Activated T-helper 1 cell treated with anti-CD3 and anti-CD28 coated beads, Interleukin-12 subunit alpha, Interleukin-12 subunit beta, Interleukin-2, Interleukin-4 antibody, amounts not matched to agents 30 ng/mL and 10 ng/mL and 1 ng/mL, durations not matched to agents 14 hours and 24 hours and 36 hours (primary cell): ENCODE measurements at regions of chr16 and their contacts with region 1.

Region 1: GRCh38 chr16:28974437-28975157 is at the start of gene SPNS1:
- DNase-seq: peak; percentile 91
- H3K4me3 Mint-ChIP-seq: peak within 1 kb of the TSS; percentile 95
- H3K27ac Mint-ChIP-seq: peak within 1 kb of the TSS; percentile 92
- H3K4me1 Mint-ChIP-seq: peaks cover 24% of the 10 kb centered on the region
- H3K27me3 Mint-ChIP-seq: no peaks in the 10 kb centered on the region
- total RNA-seq, gene SPNS1: 21.2 and 26.9 TPM in 2 replicates

Region 2: DNA sequence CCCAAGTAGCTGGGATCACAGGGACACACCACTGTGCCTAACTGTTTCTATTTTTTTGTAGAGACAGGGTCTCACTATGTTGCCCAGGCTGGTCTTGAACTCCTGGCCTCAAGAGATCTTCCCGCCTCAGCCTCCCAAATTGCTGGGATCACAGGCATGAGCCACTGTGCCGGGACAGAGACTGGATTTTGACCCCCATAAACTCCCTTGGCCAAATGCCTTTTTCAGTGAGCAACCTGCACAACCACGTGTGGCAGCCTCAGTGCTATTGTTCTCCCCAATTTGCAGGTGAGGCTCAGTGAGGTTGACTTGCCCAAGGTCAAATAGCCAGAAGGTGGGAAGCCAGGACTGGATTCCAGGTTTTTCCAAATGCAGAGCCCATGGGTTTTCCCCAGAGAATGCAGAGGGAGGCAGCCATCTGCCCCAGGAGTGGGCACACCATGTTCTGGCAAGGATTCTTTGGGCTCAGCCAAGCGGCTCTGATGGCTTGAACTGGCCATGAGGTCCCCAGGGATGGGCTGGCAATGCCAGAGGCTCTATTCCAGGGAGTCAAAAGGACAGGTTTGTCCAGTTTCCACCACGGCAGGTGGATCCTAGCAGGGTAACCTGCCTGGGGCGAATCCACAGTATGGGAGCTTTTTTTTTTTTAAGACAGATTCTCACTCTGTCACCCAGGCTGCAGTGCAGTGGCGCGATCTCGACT is 469.7 kb before region 1 on chr16:
- intact Hi-C with region 1: no loop called
- DNase-seq: no peak
- H3K4me3 Mint-ChIP-seq: no peak overlapping the region
- H3K27ac Mint-ChIP-seq: no peak overlapping the region
- H3K4me1 Mint-ChIP-seq: peaks cover 25% of the 10 kb centered on the region
- H3K27me3 Mint-ChIP-seq: peaks cover 13% of the 10 kb centered on the region

Region 3: DNA sequence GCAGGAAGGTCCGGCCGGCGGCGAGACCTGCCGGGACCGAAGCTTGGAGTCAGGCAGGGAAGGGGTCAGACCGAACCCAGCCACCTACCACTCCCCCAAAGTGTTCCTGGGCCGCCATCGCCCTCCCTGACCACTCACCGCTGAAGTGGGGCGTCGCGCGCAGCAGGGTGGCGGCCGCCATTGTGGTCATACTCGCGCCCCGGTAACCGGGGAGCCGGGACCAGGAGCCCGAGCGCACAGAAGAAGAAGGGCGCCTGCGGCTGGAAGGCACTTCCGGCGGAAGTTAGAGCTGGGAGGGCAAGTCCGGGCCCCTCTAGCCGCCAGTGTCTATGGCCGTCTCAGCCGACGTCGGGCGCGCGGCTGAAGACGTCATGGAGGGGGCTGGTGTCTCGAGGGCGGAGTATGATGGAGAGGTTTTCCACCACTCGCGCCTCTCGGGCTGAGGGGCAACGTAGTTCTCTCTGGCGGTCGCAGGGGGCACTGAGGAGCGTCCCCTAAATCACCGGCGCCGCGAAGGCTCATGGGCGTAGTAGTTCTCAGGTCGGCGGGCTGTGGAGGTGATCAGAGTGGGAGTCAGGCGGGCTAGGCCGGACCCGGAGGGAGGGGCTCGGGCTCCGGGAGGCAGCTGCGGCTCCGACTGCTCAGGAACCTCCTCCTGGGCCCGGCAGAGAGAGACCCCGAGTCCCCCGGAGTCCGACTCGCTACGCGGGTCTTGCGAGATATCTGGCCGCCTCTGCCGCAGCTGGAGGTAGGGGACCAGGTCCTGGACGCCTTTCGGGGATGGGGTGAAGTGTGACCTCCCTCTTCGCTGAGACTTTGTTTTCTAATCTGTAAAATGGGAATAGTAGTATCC is 128.3 kb before region 1 on chr16 and contains the start of gene TUFM:
- intact Hi-C with region 1: loop called (anchors 1 kb)
- DNase-seq: peak; percentile 97
- H3K4me3 Mint-ChIP-seq: peak within 1 kb of the TSS; percentile 96
- H3K27ac Mint-ChIP-seq: peak within 1 kb of the TSS; percentile 94
- H3K4me1 Mint-ChIP-seq: peaks cover 12% of the 10 kb centered on the region
- H3K27me3 Mint-ChIP-seq: no peaks in the 10 kb centered on the region
- total RNA-seq, gene TUFM: 261 and 264 TPM in 2 replicates

Region 4: GRCh38 chr16:28910086-28911031 is 64.2 kb before region 1 on chr16:
- intact Hi-C with region 1: no loop called
- DNase-seq: no peak
- H3K4me3 Mint-ChIP-seq: no peak overlapping the region
- H3K27ac Mint-ChIP-seq: no peak overlapping the region
- H3K4me1 Mint-ChIP-seq: no peaks in the 10 kb centered on the region
- H3K27me3 Mint-ChIP-seq: no peaks in the 10 kb centered on the region

Region 5: GRCh38 chr16:28950648-28951409 is 23.8 kb before region 1 on chr16 and contains the start of gene NFATC2IP:
- intact Hi-C with region 1: loop called (anchors 1 kb)
- DNase-seq: peak; percentile 99
- H3K4me3 Mint-ChIP-seq: peak within 1 kb of the TSS; percentile 95
- H3K27ac Mint-ChIP-seq: peak within 1 kb of the TSS; percentile 95
- H3K4me1 Mint-ChIP-seq: peaks cover 33% of the 10 kb centered on the region
- H3K27me3 Mint-ChIP-seq: no peaks in the 10 kb centered on the region
- total RNA-seq, gene NFATC2IP: 110 and 111 TPM in 2 replicates

Region 6: DNA sequence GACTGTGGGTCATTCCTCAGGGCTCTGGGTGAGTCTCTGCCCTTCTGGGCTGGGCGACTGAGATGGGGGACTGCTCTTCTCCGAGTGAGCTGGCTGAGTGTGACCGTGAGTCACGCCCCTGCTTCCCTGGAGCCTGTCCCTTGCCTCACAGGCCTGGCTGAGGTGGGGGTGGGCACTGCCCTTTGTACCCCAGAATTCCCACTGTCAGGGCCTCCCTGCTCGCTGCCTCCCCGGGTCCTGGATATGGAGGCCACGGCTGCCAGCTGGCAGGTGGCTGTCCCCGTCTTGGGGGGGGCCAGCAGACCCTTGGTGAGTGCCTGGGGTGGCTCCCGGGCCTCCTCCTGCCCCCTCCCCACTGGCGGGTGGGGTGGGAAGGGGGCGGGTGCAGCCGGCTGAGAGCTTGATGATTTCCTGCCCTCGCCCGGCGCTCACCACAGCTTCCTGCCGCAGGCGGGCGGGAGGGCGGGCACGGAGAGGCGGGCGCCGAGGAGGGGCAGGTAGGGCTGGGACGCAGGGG is 10.1 kb after region 1 on chr16 and contains the start of gene LAT:
- intact Hi-C with region 1: loop called (anchors 1 kb)
- DNase-seq: peak; percentile 72
- H3K4me3 Mint-ChIP-seq: peak within 1 kb of the TSS; percentile 90
- H3K27ac Mint-ChIP-seq: peak within 1 kb of the TSS; percentile 98
- H3K4me1 Mint-ChIP-seq: peaks cover 42% of the 10 kb centered on the region
- H3K27me3 Mint-ChIP-seq: no peaks in the 10 kb centered on the region
- total RNA-seq, gene LAT: 230 and 234 TPM in 2 replicates

Region 7: DNA sequence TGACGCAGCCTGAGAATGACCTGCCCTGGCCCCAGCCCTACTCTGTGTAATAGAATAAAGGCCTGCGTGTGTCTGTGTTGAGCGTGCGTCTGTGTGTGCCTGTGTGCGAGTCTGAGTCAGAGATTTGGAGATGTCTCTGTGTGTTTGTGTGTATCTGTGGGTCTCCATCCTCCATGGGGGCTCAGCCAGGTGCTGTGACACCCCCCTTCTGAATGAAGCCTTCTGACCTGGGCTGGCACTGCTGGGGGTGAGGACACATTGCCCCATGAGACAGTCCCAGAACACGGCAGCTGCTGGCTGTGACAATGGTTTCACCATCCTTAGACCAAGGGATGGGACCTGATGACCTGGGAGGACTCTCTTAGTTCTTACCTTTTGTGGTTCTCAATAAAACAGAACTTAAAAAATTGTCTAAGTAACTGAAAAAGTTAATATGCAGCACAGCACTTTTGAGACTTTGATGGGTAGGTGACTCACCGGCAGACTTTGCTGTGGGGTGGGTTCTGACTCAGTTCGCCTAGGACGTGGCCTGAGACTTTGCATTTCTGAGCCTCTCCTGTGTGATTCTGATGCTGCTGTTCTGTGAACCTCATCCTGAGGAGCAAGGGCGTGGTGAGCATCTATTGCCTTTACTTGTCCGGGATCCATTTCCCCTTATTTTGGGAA is 15.9 kb after region 1 on chr16:
- intact Hi-C with region 1: loop called (anchors 1 kb)
- DNase-seq: peak; percentile 29
- H3K4me3 Mint-ChIP-seq: peak overlapping the region; percentile 90
- H3K27ac Mint-ChIP-seq: peak overlapping the region; percentile 82
- H3K4me1 Mint-ChIP-seq: peaks cover 42% of the 10 kb centered on the region
- H3K27me3 Mint-ChIP-seq: no peaks in the 10 kb centered on the region

Region 8: GRCh38 chr16:29023279-29024277 is 49.0 kb after region 1 on chr16:
- intact Hi-C with region 1: loop called (anchors 1 kb)
- DNase-seq: no peak
- H3K4me3 Mint-ChIP-seq: no peak overlapping the region
- H3K27ac Mint-ChIP-seq: no peak overlapping the region
- H3K4me1 Mint-ChIP-seq: peaks cover 55% of the 10 kb centered on the region
- H3K27me3 Mint-ChIP-seq: no peaks in the 10 kb centered on the region

Region 9: DNA sequence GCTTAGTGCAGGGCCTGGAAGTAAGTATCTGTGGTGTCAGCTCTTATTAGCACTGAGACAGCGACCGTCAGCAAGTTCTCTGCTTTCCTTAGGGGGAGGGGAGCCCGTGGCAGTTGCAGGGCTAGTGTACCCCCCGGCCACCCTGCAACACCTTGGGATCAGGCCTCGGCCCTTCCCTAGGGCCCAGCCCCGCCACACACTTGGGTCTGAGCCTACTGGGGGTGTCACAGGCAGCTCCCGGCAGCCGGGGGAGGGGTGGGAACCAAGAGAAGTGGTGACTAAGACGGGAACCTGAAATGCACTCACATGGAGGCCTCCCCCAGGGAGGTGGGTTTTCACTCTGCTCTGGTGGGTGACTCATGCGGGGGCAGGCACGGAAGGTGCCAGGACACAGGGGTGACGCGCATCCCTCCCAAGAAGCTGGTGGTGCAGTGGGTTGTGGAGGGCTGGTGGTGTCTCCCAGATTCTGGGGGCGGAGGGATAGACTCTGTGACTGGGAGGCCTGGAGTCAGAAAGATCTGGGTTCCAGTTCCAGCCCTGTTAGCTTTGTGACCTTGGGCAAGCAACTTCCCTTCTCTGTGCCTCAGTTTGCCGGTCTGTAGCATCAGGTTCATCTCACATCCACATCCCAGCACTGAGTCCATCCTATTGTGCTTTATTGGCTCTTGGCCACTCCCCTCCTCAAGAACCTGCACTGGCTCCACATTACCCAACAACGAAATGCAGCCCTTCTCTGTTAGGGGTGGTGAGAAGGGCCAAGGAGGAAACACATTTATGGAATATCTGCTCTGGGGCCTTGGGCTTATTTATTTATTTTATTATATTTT is 54.8 kb after region 1 on chr16:
- intact Hi-C with region 1: loop called (anchors 1 kb)
- DNase-seq: peak; percentile 55
- H3K4me3 Mint-ChIP-seq: no peak overlapping the region
- H3K27ac Mint-ChIP-seq: peak overlapping the region; percentile 74
- H3K4me1 Mint-ChIP-seq: peaks cover 38% of the 10 kb centered on the region
- H3K27me3 Mint-ChIP-seq: peaks cover 2% of the 10 kb centered on the region